Psoas muscle (tissue), 8 donors: ENCODE measurements at regions of chr12 and their contacts with region 1.

Region 1: DNA sequence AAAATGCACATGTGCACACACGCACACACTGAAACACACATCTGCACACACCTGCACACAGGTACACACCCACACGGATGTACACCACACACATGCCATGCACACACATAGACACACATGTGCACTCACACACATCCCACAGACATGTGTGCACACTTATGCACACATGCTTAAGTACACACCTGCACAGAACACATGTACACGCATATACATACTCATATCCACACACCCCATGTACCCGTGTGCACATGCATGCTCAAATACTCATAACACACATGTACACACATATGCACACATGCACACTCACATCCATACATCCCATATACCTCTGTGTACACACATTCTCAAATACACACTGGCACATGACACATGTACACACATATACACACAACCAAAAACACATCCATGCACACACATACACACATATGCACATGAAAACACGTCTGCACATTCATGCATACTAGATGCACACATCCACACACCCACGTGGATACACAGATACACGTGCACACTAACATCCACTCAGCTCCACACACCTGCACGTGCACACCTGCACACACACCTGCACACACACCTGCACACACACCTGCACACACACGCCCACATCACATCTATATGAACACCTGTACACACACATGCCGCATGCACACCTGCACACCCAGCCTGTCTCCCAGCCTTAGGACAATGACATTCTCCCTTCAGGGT is 336.7 kb downstream of the ADGRD1 start:
- DNase-seq: no peak
- ATAC-seq: no peak
- H3K4me3 ChIP-seq: no peak overlapping the region
- H3K27ac ChIP-seq: no peak overlapping the region
- H3K4me1 ChIP-seq: no peaks in the 10 kb centered on the region
- H3K27me3 ChIP-seq: no peaks in the 10 kb centered on the region
- CTCF ChIP-seq: no peak

Region 2: GRCh38 chr12:131194166-131194565 is 96.2 kb before region 1 on chr12:
- intact Hi-C with region 1: no loop called
- DNase-seq: no peak
- ATAC-seq: no peak
- H3K4me3 ChIP-seq: no peak overlapping the region
- H3K27ac ChIP-seq: no peak overlapping the region
- H3K4me1 ChIP-seq: no peaks in the 10 kb centered on the region
- H3K27me3 ChIP-seq: peaks cover 0 to 8% (median 3%) of the 10 kb centered on the region in 3 donors
- CTCF ChIP-seq: no peak

Region 3: GRCh38 chr12:131673888-131674257 is 383.5 kb after region 1 on chr12:
- intact Hi-C with region 1: loop called in 1 of 2 experiments (anchors 5 kb)
- DNase-seq: no peak
- ATAC-seq: no peak
- H3K4me3 ChIP-seq: no peak overlapping the region
- H3K27ac ChIP-seq: no peak overlapping the region
- H3K4me1 ChIP-seq: no peaks in the 10 kb centered on the region
- H3K27me3 ChIP-seq: peaks cover 0 to 33% (median 3%) of the 10 kb centered on the region in 3 donors
- CTCF ChIP-seq: no peak